Lower leg skin (tissue), 4 donors: ENCODE measurements at regions of chr3 and their contacts with region 1.

Region 1: DNA sequence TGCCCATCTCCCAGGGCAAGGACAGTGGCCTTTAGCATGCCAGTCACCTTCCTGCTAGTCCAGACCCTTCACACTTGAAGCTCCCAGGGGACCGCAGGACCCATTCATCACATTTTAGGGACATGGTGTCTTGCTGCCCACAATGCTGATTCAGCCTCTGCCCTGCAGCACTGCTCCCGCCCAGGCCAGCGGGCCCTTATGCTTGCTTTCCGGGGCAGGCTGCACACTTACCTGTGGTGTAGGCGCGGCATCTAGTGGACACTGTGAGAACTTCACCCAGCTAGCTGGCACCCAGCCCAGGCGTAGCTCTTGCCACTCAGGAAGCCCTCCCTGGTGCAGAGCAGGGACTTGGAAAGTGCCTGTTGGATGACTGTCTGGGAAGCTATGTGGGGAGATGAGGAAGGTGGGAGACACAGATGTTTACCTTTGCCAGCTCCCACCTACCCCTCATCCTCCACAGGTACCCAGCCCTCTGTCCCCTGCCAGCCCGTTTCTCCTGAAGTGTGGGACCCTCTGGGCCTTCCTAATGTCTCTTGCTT is 26.2 kb upstream of the NR2C2 start:
- DNase-seq: peak; percentile 88 to 97
- H3K4me3 ChIP-seq: no peak overlapping the region
- CTCF ChIP-seq: peak in 2 of 3 donors; percentile 81 to 99
- POLR2A ChIP-seq: no peak

Region 2: DNA sequence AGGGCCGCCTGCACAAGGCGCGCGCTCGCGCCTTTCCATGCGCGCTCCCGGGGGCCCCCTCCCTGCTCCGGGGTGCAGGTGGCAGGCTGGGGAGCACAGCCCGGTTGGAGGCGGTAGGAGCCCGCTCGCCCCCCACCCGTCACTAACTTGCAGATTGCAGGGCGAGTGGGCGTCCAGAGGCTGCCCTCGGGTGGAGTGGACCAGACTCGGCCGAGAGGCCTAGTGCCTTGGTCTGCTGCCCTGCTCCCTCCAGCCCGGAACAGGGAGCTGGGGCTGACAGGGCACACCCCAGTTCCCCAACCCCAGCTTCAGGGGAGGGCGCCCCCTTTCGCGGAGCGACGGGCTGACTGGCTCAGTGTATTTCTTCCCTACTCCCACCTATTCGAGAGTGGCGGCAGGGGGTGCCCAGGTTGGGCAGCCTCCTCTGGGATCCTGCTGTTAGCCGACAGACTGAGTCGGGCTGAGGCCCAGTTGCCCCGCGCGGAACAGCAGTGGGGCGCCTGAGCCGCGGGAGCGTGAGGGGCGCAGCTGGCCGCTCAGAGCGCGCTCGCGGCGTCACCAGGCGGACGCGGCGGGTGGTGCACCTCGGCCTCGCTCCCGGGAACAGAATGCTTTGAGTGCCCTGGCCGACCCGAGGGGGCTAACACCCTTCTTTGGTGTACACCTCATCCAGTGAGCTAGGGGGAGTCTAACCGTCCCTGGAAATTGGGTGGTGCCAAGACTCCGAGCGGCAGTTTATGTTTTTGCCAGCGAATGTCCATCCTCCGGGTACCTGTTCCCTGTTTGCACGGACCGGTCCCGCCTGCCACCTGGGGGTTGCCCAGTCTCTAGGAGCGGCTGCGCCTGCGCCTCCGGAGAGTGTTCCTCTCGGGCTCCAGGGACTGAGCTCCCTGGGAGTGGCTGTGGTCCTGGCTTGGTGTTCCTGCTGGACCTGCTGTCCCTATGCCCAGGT is 1040.7 kb before region 1 on chr3:
- intact Hi-C with region 1: no loop called
- DNase-seq: peak in 1 of 2 donors; percentile 82
- H3K4me3 ChIP-seq: no peak overlapping the region
- CTCF ChIP-seq: no peak
- POLR2A ChIP-seq: no peak

Region 3: DNA sequence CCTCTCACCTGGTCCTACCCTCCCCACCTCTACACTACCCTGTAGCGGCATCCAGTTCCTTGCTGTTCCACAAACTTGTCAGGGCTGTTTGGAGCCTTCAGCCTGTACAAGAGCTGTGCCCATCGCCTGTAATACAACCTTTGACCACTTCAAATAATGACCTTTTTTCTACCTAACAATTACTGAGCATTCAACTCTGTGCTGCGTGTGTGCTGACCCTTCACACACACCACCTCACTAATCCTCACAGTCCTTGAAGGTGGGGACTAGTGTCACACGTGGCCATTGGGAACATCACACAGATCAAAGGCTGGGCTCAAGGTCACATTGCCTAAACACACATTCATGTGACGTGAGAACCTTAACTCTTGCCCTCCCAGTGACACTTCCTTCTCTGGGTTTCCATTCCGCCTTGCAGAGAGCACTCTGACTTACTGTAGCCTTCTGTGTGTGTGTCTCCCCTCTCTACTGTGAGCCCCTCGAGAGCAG is 243.1 kb before region 1 on chr3:
- intact Hi-C with region 1: loop called (anchors 10 kb)
- DNase-seq: no peak
- H3K4me3 ChIP-seq: no peak overlapping the region
- CTCF ChIP-seq: no peak
- POLR2A ChIP-seq: no peak

Region 4: GRCh38 chr3:14791343-14791945 is 129.7 kb before region 1 on chr3:
- intact Hi-C with region 1: loop called (anchors 5 kb)
- DNase-seq: peak; percentile 51 to 93
- H3K4me3 ChIP-seq: no peak overlapping the region
- CTCF ChIP-seq: no peak
- POLR2A ChIP-seq: no peak

Region 5: GRCh38 chr3:14969671-14970070 is 48.5 kb after region 1 on chr3:
- intact Hi-C with region 1: no loop called
- DNase-seq: no peak
- H3K4me3 ChIP-seq: no peak overlapping the region
- CTCF ChIP-seq: no peak
- POLR2A ChIP-seq: no peak

Region 6: GRCh38 chr3:15377961-15378791 is 457.0 kb after region 1 on chr3:
- intact Hi-C with region 1: no loop called
- DNase-seq: peak; percentile 93 to 98
- H3K4me3 ChIP-seq: no peak overlapping the region
- CTCF ChIP-seq: peak in 1 of 3 donors; percentile 76
- POLR2A ChIP-seq: no peak